OCI-LY7 (cell line): ENCODE measurements at regions of chr3 and their contacts with region 1.

Region 1: DNA sequence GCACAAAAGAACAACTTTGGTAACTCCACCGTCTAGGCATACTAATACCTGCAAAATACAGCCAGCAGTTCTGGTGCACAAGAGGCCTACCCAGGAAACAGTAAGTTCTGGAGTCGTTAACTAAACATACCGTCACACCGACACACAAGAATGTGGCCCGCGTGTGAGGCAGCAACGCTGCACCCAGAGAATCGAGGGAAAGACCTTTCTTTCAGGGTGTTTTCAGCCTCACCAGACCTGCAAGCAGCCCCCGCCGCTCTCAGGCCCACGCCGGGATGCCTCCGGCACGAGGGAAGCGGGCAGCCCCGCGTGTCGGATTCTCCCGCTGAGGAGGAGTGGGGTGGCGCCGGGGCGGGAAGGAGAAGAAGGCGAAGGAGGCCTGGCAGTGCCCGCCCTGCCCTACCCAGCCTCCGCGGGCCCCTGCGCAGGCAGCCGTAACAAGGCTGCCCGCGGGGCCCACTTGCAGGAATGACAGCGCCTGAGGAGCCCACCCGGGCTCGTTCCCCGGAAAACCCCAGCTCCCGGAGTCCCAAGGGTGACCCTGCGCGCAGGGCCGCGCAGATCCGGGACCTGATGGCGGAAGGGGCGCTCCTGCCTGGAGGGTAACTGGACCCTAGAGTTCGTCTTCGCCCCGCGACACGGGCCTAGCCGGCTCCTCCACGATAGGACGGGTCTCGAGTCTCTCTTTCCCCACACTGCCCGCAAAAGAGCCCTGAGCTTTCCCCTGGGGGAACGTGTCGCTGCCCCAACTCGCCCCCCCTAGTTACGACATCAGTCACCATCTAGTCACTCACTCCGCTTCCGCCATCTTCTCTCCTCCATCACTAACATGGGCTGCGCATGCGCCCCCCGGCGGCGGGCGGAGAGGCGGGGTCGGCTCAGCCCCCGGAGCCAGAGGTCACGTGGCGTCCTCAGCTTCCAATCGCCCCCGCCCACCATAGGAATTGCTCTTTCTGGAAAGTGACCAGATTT is at the start of gene PHC3:
- DNase-seq: peak; percentile 94
- H3K4me3 ChIP-seq: peak within 1 kb of the TSS; percentile 79
- H3K27ac ChIP-seq: peak within 1 kb of the TSS; percentile 65
- H3K4me1 ChIP-seq: peaks cover 23% of the 10 kb centered on the region
- CTCF ChIP-seq: peak; percentile 51; the same call in 1 of the 2 replicates
- total RNA-seq, gene PHC3: 36.1 and 40.6 TPM in 2 replicates

Region 2: DNA sequence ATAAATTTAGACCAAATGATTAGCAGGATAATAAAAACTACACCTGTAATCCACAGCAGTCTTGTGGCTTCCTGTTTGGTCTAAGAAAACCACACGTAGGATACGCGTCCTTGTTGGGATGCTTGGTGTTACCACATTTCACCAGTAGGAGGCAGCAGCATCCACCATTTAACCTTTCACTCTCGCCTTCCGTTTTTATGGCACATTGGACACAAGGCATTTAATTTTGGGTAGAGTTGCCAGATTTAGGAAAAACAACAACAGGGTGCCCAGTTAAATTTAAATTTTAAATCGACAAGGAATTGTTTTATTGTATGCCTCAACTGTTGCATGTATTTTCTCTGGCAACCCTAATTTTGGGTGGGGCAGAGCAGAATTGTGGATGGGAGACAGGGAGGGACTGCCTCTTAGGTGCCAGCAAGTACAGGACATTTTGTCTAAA is 317.7 kb before region 1 on chr3:
- CTCF ChIA-PET with region 1: no interaction called
- POLR2A ChIA-PET with region 1: no interaction called
- intact Hi-C with region 1: loop called (anchors 10 kb)
- DNase-seq: peak; percentile 85
- H3K4me3 ChIP-seq: no peak overlapping the region
- H3K27ac ChIP-seq: no peak overlapping the region
- H3K4me1 ChIP-seq: peaks cover 33% of the 10 kb centered on the region
- CTCF ChIP-seq: peak; percentile 99

Region 3: GRCh38 chr3:170154569-170155143 is 26.5 kb before region 1 on chr3:
- CTCF ChIA-PET with region 1: no interaction called
- POLR2A ChIA-PET with region 1: interaction called, 12 read pairs
- intact Hi-C with region 1: no loop called
- DNase-seq: peak; percentile 90
- H3K4me3 ChIP-seq: peak overlapping the region; percentile 52
- H3K27ac ChIP-seq: peak overlapping the region; percentile 98
- H3K4me1 ChIP-seq: peaks cover 82% of the 10 kb centered on the region
- CTCF ChIP-seq: no peak

Region 4: DNA sequence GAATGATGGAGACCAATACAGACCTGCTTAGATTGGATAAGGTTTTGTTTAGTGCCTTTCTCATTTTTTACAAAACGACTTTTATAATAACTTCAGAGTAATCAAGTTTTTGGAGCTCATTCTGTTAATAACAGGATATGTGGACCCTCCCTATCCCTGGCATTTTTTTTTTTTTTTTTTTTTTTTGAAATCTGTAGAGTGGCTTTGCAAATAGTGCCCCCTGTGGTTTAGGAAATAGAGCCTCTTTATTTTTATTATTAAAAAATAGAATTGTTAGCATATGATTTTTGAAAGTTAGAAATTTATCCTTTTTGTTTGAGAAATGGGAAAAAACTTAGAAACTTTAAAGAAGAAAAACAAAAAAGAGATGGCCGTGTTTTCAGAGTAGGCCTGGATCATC is 187.7 kb after region 1 on chr3:
- CTCF ChIA-PET with region 1: no interaction called
- POLR2A ChIA-PET with region 1: interaction called, 5 read pairs
- intact Hi-C with region 1: loop called (anchors 5 kb)
- DNase-seq: no peak
- H3K4me3 ChIP-seq: peak overlapping the region; percentile 69
- H3K27ac ChIP-seq: peak overlapping the region; percentile 80
- H3K4me1 ChIP-seq: peaks cover 81% of the 10 kb centered on the region
- CTCF ChIP-seq: peak; percentile 86

Region 5: DNA sequence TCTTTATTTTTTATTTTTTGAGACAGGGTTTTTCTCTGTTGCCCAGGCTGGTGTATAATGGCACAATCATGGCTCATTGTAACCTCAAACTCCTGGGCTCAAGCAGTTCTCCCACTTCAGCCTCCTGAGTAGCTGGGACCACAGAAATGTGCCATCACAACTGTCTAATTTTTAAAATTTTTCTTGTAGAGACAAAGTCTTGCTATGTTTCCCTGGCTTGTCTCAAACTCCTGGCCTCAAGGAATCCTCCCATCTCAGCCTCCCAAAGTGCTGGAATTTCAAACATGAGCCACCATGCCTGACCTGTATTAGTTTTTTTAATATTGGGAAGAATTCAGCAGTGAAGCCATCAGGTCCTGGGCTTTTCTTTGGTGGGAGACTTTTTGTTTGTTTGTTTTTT is 223.9 kb after region 1 on chr3:
- CTCF ChIA-PET with region 1: no interaction called
- POLR2A ChIA-PET with region 1: no interaction called
- intact Hi-C with region 1: loop called (anchors 10 kb)
- DNase-seq: no peak
- H3K4me3 ChIP-seq: no peak overlapping the region
- H3K27ac ChIP-seq: no peak overlapping the region
- H3K4me1 ChIP-seq: no peaks in the 10 kb centered on the region
- CTCF ChIP-seq: no peak